ENCODE measurements at regions of chr22 and their contacts with region 1.

Region 1: DNA sequence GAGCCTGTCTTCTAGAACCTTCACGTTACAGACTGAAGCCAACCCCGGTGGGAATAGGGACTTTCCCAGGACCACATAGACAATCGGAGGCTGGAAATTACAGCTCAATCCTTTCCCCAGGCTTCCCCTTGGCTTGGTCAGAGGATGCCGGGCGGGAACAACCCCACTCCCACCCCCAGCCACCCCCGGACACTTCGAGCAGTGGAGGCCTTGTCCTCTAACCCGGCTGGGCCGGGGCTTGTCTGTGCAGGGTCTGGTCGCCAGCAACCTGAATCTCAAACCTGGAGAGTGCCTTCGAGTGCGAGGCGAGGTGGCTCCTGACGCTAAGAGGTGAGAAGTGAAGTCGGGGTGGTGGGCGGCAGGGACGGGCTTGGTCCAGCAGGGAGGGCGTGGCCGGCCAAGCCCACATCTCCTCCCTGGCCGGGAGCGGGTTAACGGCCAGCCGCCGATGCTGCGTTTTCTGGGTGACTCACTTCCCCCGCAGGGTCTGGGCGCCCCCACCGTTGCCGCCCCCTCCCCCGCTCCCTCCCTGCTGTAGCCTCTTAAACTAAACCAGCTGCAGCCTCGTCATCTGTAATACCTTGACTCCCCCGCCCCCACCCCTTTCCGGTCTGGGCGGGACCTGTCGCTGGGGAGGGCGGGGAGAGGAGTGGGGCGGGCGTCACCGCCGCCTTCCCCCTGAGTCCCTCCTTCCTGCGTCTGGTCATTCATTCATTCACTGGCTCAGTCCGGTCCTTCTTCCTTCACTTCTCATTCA is 1.5 kb downstream of the LGALS1 start:
- DNase-seq: peak; percentile 87
- H3K4me3 ChIP-seq: peak overlapping the region; percentile 97
- CTCF ChIP-seq: no peak

Region 2: DNA sequence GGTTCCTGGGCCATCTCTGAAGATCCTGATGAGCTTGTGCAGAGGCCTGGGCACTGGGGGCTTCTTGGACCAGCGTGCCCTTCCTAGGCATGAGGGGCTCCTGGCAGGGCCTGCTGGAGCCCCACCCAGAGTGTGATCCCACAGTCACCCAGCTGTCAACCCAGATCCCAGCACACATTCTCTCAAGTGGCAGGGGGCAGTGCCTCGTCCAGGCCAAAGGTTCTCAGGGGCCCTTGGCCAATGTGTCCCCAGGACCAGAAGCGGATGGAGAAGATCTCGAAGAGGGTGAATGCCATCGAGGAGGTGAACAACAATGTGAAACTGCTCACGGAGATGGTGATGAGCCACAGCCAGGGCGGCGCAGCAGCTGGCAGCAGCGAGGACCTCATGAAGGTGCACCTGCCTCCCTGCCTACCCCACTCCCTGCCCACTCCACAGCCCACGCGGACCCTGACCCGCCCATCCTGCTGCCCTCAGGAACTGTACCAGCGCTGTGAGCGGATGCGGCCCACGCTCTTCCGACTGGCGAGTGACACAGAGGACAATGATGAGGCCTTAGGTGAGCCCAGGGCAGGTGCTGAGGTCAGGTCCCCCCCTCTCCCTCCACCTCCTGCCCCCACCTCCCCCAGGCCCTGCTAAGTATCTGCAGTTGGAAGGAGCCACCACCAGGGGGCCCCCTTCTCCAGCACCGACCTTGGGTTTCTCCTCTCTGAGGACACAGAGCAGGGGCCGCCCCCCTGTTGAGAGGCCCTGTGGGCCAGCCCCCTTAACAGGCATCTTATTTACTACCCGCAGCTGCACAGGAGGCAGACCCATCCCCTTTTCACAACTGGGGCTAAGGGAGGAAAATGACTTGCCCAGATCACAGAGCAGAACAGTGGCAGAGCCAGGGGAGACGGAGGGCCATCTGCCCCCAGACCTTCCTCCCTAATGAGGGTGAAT is 53.6 kb before region 1 on chr22:
- CTCF ChIA-PET with region 1: interaction called, 33 read pairs
- POLR2A ChIA-PET with region 1: interaction called, 6 read pairs
- DNase-seq: no peak
- H3K4me3 ChIP-seq: no peak overlapping the region
- CTCF ChIP-seq: peak; percentile 88

Region 3: GRCh38 chr22:37633625-37634416 is 43.1 kb before region 1 on chr22:
- CTCF ChIA-PET with region 1: interaction called, 430 read pairs
- POLR2A ChIA-PET with region 1: interaction called, 28 read pairs
- DNase-seq: peak; percentile 42
- H3K4me3 ChIP-seq: no peak overlapping the region; the same call in 1 of the 2 replicates
- CTCF ChIP-seq: peak; percentile 39

Region 4: DNA sequence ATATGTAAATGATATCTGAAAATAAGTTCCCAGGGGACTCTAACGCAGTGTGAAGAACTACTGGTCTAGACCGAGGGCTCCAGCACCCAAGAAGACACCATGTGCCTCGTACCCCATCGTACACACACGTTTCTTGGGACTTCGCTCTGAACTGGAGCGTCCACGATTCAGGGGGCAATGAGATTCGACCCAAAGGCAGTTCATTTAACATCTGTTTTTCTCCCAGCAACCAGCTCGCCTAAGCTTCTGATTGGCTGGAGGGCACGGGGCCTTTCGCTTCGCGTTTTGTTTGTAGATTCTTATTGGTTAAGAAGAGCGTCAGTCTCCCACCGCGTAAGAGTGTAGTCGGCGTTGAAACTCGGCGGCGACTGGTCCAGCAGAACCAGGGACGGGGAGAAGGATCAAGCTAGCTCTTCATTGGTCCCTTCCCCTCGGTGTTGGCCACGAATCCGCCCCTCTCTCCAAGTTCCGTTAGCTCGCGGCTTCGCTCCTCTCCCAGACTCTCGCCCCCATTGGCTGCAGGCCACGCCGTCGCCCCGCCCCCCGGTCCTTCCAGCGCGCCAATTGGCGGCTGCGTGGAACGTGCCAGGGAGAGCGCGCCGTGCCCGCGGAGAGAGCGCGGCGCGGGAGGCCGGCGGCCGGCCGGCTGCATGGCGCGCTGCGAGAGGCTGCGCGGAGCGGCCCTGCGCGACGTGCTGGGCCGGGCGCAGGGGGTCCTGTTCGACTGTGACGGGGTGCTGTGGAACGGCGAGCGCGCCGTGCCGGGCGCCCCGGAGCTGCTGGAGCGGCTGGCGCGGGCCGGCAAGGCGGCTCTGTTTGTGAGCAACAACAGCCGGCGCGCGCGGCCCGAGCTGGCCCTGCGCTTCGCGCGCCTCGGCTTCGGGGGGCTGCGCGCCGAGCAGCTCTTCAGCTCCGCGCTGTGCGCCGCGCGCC is 18.5 kb before region 1 on chr22 and contains the start of gene PDXP:
- CTCF ChIA-PET with region 1: interaction called, 121 read pairs
- POLR2A ChIA-PET with region 1: interaction called, 52 read pairs
- DNase-seq: peak; percentile 100
- H3K4me3 ChIP-seq: peak within 1 kb of the TSS; percentile 78
- CTCF ChIP-seq: no peak

Region 5: GRCh38 chr22:37664249-37665101 is 12.4 kb before region 1 on chr22:
- CTCF ChIA-PET with region 1: interaction called, 121 read pairs
- POLR2A ChIA-PET with region 1: interaction called, 50 read pairs
- DNase-seq: no peak
- H3K4me3 ChIP-seq: no peak overlapping the region
- CTCF ChIP-seq: no peak

Region 6: GRCh38 chr22:37696657-37697537 is 20.0 kb after region 1 on chr22 and contains the start of gene TRIOBP:
- CTCF ChIA-PET with region 1: interaction called, 10 read pairs
- POLR2A ChIA-PET with region 1: interaction called, 14 read pairs
- DNase-seq: peak; percentile 72
- H3K4me3 ChIP-seq: peak within 1 kb of the TSS; percentile 64
- CTCF ChIP-seq: peak; percentile 63

Measured in AG04449 (cell line).